Activated naive CD4-positive, alpha-beta T cell treated with anti-CD3 and anti-CD28 coated beads for 36 hours (primary cell): ENCODE measurements at regions of chr12 and their contacts with region 1.

Region 1: GRCh38 chr12:59408431-59408830 is 187.4 kb upstream of the SLC16A7 start:
- DNase-seq: no peak
- H3K4me3 Mint-ChIP-seq: no peak overlapping the region
- H3K27ac Mint-ChIP-seq: no peak overlapping the region
- H3K4me1 Mint-ChIP-seq: peaks cover 12% of the 10 kb centered on the region
- H3K27me3 Mint-ChIP-seq: no peaks in the 10 kb centered on the region

Region 2: GRCh38 chr12:59283012-59283411 is 125.4 kb before region 1 on chr12:
- CTCF ChIA-PET with region 1: no interaction called
- intact Hi-C with region 1: no loop called
- DNase-seq: no peak
- H3K4me3 Mint-ChIP-seq: no peak overlapping the region
- H3K27ac Mint-ChIP-seq: no peak overlapping the region
- H3K4me1 Mint-ChIP-seq: no peaks in the 10 kb centered on the region
- H3K27me3 Mint-ChIP-seq: no peaks in the 10 kb centered on the region

Region 3: GRCh38 chr12:59580050-59580449 is 171.6 kb after region 1 on chr12:
- CTCF ChIA-PET with region 1: no interaction called
- intact Hi-C with region 1: loop called (anchors 5 kb)
- DNase-seq: no peak
- H3K4me3 Mint-ChIP-seq: no peak overlapping the region
- H3K27ac Mint-ChIP-seq: no peak overlapping the region
- H3K4me1 Mint-ChIP-seq: peaks cover 34% of the 10 kb centered on the region
- H3K27me3 Mint-ChIP-seq: no peaks in the 10 kb centered on the region